Right lobe of liver (tissue), 6 donors: ENCODE measurements at regions of chr10 and their contacts with region 1.

Region 1: GRCh38 chr10:124530215-124530665 is 68.6 kb downstream of the LHPP start:
- DNase-seq: peak; percentile 84 to 89 (median 87)
- ATAC-seq: peak; percentile 85 to 94 (median 91)
- H3K4me3 ChIP-seq: no peak overlapping the region
- H3K27ac ChIP-seq: no peak overlapping the region
- H3K4me1 ChIP-seq: peaks cover 0 to 2% (median 0%) of the 10 kb centered on the region in 4 donors
- H3K27me3 ChIP-seq: no peaks in the 10 kb centered on the region
- CTCF ChIP-seq: peak; percentile 83 to 90 (median 86)
- POLR2A ChIP-seq: no peak

Region 2: DNA sequence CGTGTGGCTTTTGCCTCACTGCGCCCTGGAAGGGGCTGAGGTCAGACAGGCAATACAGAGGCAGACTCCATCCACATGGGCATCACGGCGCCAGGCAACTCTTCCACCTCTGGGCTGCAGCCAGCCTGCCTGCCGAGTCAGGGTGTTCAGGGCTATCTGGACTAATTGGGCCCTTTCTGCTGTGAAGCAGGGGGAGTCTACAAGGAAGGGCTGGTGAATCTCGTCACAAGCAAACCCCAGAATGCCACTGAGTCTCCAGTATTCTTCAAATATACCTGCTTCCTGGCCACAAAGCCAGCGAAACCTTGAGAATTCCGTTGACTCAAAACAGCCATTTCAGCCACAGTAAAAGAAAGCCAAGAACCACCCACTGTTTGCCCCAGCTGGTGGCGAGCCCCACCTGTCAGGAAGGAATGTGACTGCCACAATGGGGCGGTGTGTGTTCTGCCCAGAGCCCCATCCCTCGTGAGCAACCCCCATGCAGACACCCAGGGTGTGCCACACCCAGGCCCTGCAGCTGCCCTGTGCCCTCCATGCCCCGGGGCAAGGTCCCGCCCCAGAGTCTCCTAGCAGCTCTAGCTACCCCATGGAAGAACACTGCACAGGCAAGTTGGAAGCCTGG is 96.6 kb after region 1 on chr10:
- intact Hi-C with region 1: loop called in 1 of 2 experiments (anchors 10 kb)
- DNase-seq: no peak
- ATAC-seq: peak in 2 of 4 donors; percentile 2 to 23
- H3K4me3 ChIP-seq: no peak overlapping the region
- H3K27ac ChIP-seq: no peak overlapping the region
- H3K4me1 ChIP-seq: peaks cover 0 to 1% (median 0%) of the 10 kb centered on the region in 4 donors
- H3K27me3 ChIP-seq: no peaks in the 10 kb centered on the region
- CTCF ChIP-seq: no peak
- POLR2A ChIP-seq: no peak

Region 3: DNA sequence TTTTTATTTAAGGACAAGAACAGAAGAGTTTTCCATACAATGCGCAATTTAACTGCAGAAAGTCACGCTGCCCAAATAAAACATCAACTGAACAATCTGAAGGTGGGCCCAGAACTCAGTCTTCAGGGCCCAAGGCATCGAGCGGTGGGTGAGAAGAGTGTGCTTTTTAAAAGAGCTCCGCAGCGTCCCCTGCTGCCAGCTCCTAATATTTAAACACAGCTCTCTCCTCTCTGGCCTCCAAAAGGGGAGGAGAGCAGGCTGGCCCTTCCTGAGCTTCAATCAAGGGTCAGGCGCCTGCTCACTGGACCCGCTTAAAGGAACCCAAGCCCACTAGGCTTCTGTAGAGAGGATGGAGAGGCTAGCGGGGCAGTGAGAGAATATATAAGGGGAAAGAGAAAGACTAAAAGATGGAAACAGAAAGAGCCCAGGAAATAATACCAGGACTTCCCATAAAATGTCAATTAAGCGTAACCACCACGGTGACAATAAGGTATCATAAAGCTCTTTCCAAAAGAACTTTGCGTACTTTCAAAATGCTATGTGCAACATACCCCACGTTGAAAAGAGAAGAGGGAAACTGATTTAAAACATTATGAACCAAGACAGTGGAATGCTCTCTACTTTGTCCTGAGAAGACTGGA is 211.2 kb after region 1 on chr10:
- intact Hi-C with region 1: loop called in 1 of 2 experiments (anchors 5 kb)
- DNase-seq: peak; percentile 81
- ATAC-seq: peak; percentile 55 to 69 (median 62)
- H3K4me3 ChIP-seq: peak overlapping the region in 1 of 3 donors; percentile 12
- H3K27ac ChIP-seq: peak overlapping the region; percentile 30 to 53 (median 46)
- H3K4me1 ChIP-seq: peaks cover 0 to 59% (median 33%) of the 10 kb centered on the region in 4 donors
- H3K27me3 ChIP-seq: no peaks in the 10 kb centered on the region
- CTCF ChIP-seq: peak; percentile 78 to 88 (median 82)
- POLR2A ChIP-seq: no peak

Region 4: DNA sequence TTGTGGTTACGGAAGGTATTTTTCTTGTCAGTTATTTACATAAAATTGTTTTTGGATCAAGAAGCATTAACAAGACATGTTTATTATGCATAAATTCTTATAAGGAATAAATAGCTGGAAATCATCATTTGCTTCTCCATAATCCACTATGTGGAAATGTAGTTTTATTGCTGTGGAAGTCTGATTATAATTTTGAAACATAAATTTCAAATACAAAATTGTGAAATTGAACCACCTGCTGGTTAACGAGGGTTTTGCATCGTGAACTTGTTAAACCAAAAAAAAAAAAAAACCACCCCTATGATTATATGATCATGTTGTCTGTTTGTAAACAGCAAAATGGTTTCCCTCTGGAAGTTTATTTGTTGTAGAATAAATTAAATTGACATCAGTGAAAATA is 297.2 kb after region 1 on chr10:
- intact Hi-C with region 1: loop called in 1 of 2 experiments (anchors 10 kb)
- DNase-seq: no peak
- ATAC-seq: no peak
- H3K4me3 ChIP-seq: no peak overlapping the region
- H3K27ac ChIP-seq: no peak overlapping the region
- H3K4me1 ChIP-seq: no peaks in the 10 kb centered on the region
- H3K27me3 ChIP-seq: no peaks in the 10 kb centered on the region
- CTCF ChIP-seq: peak; percentile 35 to 58 (median 52)
- POLR2A ChIP-seq: no peak